ENCODE measurements at regions of chr7 and their contacts with region 1.

Region 1: DNA sequence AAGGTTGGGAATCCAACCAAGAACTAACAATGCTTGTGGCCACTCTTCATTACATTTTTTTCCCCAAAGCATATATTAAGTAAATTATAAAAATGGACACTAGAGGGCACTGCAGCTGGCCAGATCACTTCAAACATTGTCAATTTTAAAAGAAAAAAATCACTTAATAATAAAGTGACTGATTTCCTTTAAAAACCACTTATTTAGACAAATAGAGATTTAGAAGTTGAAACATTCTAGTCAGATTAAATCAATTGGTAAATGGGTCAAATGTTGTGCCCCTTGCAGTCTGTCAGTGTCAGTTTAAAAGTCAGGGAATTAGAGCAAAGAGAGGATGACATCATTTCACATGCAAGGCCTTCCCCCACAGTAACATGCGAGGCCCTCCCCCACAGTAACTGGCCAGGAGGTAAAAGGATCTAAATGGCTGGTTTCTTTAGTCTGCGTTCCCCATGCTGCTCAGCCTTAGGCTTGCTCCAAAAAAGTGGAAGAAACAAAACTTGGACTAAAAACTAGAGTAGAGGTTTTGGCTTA is 177.9 kb downstream of the SKAP2 start:
- DNase-seq: peak; percentile 17
- H3K4me3 ChIP-seq: no peak overlapping the region; a peak in 1 of 4 replicates
- H3K27ac ChIP-seq: no peak overlapping the region
- H3K4me1 ChIP-seq: peaks cover 0 to 5% of the 10 kb centered on the region in 2 experiments; a peak in 2 of 4 replicates
- H3K27me3 ChIP-seq: peaks cover 9% of the 10 kb centered on the region
- CTCF ChIP-seq: peak; percentile 98
- EP300 ChIP-seq: no peak
- RAD21 ChIP-seq: peak; percentile 83

Region 2: DNA sequence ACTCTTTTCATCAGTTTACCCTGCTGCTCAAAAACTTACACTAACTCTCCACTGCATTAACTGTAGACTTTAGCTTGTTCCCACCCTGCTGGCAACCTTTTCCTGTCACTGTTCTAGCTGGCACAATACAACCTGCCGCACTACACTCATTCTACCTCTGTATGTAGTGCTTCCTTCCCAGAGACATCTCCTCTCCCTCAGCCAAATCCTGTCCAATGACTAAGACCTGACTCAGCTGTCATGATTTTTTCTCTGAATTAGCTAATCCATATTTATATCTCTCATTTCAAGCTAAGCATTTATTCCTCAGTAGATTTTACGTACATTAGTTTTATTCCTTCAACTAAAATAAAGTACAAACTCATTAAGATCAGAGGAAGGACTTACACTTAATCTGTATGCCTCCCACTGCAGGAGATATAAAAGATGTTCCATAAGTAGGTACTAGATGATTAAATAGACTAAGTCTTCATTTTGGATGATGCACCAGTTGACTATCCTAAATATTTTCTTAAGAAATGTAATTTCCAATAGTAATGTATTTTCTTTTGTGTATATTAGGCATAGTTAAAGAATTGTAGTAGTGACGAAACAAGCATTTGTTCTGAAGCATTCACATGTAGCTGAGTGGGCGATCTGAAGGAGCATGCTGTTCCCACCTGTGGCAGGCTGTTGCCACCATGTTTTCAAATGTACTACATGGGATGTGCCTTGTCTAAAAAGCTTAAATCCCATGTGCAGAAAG is 11.2 kb before region 1 on chr7:
- CTCF ChIA-PET with region 1: interaction called, 77 read pairs
- POLR2A ChIA-PET with region 1: no interaction called
- DNase-seq: no peak
- H3K4me3 ChIP-seq: no peak overlapping the region
- H3K27ac ChIP-seq: no peak overlapping the region
- H3K4me1 ChIP-seq: no peaks in the 10 kb centered on the region; a peak in 1 of 4 replicates
- H3K27me3 ChIP-seq: no peaks in the 10 kb centered on the region
- CTCF ChIP-seq: no peak
- EP300 ChIP-seq: no peak
- RAD21 ChIP-seq: no peak

Region 3: DNA sequence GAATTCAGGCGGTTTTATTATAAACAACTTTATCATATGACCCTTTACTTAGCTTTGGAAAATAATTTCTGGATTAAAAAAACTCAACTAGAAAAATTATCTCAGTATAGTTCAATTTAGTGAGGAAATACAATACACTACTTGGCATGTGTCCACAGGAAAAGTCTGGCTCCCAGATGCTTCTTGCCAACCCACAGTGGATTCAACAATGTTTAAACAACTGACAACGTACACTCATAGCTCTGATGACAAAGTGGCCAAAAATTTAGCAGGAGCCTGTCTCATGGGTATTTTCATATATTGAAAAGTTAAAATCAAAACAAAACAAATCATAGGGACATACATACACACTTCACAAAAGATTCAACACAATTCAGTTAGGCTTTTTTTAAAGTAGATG is 19.1 kb after region 1 on chr7:
- CTCF ChIA-PET with region 1: interaction called, 38 read pairs
- POLR2A ChIA-PET with region 1: no interaction called
- DNase-seq: peak; percentile 64
- H3K4me3 ChIP-seq: no peak overlapping the region
- H3K27ac ChIP-seq: peak overlapping the region in 1 of 2 experiments; percentile 47; a peak in 1 of 4 replicates
- H3K4me1 ChIP-seq: peaks cover 6 to 16% of the 10 kb centered on the region in 2 experiments; a peak in 2 of 4 replicates
- H3K27me3 ChIP-seq: no peaks in the 10 kb centered on the region
- CTCF ChIP-seq: no peak
- EP300 ChIP-seq: peak in 1 of 2 experiments; percentile 61; a peak in 1 of 4 replicates
- RAD21 ChIP-seq: no peak

Region 4: GRCh38 chr7:27150568-27151340 is 464.2 kb after region 1 on chr7:
- CTCF ChIA-PET with region 1: interaction called, 42 read pairs
- POLR2A ChIA-PET with region 1: no interaction called
- DNase-seq: peak; percentile 96
- H3K4me3 ChIP-seq: peak overlapping the region; percentile 32 to 63
- H3K27ac ChIP-seq: no peak overlapping the region
- H3K4me1 ChIP-seq: peaks cover 0 to 9% of the 10 kb centered on the region in 2 experiments; a peak in 1 of 4 replicates
- H3K27me3 ChIP-seq: peaks cover 100% of the 10 kb centered on the region
- CTCF ChIP-seq: peak; percentile 91
- EP300 ChIP-seq: peak in 1 of 2 experiments; percentile 40; a peak in 1 of 4 replicates
- RAD21 ChIP-seq: peak; percentile 51